PC-9 (cell line): ENCODE measurements at regions of chr11 and their contacts with region 1.

Region 1: GRCh38 chr11:72483412-72484186 is 49.3 kb upstream of the CLPB start:
- DNase-seq: peak in 1 of 2 experiments; percentile 47
- H3K4me3 ChIP-seq: no peak overlapping the region
- H3K27ac ChIP-seq: no peak overlapping the region
- H3K4me1 ChIP-seq: peaks cover 5% of the 10 kb centered on the region
- H3K27me3 ChIP-seq: no peaks in the 10 kb centered on the region
- CTCF ChIP-seq: no peak

Region 2: GRCh38 chr11:72287293-72287692 is 196.3 kb before region 1 on chr11:
- CTCF ChIA-PET with region 1: no interaction called
- POLR2A ChIA-PET with region 1: interaction called, 17 read pairs
- intact Hi-C with region 1: no loop called
- DNase-seq: no peak
- H3K4me3 ChIP-seq: no peak overlapping the region
- H3K27ac ChIP-seq: no peak overlapping the region
- H3K4me1 ChIP-seq: no peaks in the 10 kb centered on the region
- H3K27me3 ChIP-seq: peaks cover 5% of the 10 kb centered on the region; the same call in 1 of the 2 replicates
- CTCF ChIP-seq: no peak

Region 3: DNA sequence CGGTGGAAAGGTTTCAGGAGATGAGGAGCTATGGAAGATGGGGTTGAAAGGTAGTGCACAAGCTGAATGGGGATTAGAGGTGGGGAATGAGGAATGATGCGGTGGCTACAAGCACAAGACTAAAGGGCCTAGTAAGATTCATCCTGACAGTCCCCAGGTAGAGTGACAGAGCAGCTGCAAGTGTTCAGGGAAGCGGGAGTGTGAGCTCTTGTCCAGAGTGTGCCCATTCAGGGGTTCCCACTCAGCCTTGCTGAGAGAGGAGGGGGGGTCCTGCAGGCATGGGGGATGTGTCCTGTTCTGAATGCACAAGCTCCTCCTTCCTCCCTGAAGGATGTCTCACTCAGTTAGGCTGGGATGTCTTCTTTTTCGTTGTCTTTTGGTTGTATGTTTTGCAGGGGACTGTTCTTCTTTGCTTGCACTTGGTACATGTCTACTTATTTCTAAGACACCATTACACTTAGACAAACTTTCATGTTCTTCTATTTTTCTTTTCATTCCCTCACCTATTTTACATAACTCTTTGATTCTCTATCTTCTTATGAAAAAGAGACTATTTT is 23.4 kb before region 1 on chr11:
- CTCF ChIA-PET with region 1: interaction called, 13 read pairs
- POLR2A ChIA-PET with region 1: no interaction called
- intact Hi-C with region 1: no loop called
- DNase-seq: no peak
- H3K4me3 ChIP-seq: no peak overlapping the region
- H3K27ac ChIP-seq: no peak overlapping the region
- H3K4me1 ChIP-seq: no peaks in the 10 kb centered on the region
- H3K27me3 ChIP-seq: peaks cover 66% of the 10 kb centered on the region
- CTCF ChIP-seq: no peak

Region 4: GRCh38 chr11:72573072-72573854 is 89.7 kb after region 1 on chr11:
- CTCF ChIA-PET with region 1: no interaction called
- POLR2A ChIA-PET with region 1: no interaction called
- intact Hi-C with region 1: loop called (anchors 1 kb)
- DNase-seq: peak in 1 of 2 experiments; percentile 54
- H3K4me3 ChIP-seq: no peak overlapping the region
- H3K27ac ChIP-seq: no peak overlapping the region
- H3K4me1 ChIP-seq: peaks cover 50% of the 10 kb centered on the region
- H3K27me3 ChIP-seq: no peaks in the 10 kb centered on the region
- CTCF ChIP-seq: peak; percentile 85

Region 5: DNA sequence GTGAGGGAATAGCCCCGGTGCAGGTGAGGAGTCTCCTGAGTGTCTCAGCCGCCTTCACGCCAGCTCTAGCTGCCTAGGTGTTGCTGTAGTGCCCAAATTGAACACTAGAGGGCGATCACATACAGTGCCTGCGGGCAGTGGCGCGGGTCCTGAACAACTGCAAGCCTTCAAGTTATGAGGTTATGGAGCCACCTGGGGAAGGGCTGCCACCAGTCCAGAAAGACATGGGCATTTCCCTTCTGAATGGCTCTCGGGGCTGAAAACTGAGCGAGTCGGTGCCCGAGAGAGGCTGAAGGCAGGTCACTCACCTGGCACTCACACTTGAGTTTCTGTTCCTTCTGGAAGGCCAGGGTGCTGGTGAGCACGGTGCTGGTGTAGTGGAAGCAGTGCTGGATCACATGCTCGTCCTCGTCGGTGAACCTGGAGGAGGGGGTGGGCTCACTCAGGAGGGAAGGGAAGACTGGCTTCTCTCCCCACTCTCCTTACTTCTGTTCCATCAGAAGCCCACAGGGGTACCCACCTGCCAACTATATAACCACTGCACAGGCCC is 102.2 kb after region 1 on chr11:
- CTCF ChIA-PET with region 1: no interaction called
- POLR2A ChIA-PET with region 1: no interaction called
- intact Hi-C with region 1: loop called (anchors 5 kb)
- DNase-seq: peak in 1 of 2 experiments; percentile 66
- H3K4me3 ChIP-seq: no peak overlapping the region
- H3K27ac ChIP-seq: no peak overlapping the region
- H3K4me1 ChIP-seq: no peaks in the 10 kb centered on the region
- H3K27me3 ChIP-seq: no peaks in the 10 kb centered on the region
- CTCF ChIP-seq: peak; percentile 97

Region 6: GRCh38 chr11:73325036-73325981 is 841.7 kb after region 1 on chr11:
- CTCF ChIA-PET with region 1: no interaction called
- POLR2A ChIA-PET with region 1: no interaction called
- intact Hi-C with region 1: loop called (anchors 5 kb)
- DNase-seq: no peak
- H3K4me3 ChIP-seq: no peak overlapping the region
- H3K27ac ChIP-seq: no peak overlapping the region
- H3K4me1 ChIP-seq: peaks cover 12% of the 10 kb centered on the region
- H3K27me3 ChIP-seq: no peaks in the 10 kb centered on the region
- CTCF ChIP-seq: no peak